Mammary epithelial cell (primary cell): ENCODE measurements at regions of chr18 and their contacts with region 1.

Region 1: GRCh38 chr18:61893971-61894750 is 1.4 kb upstream of the RNF152 start:
- DNase-seq: peak; percentile 79
- H3K4me3 ChIP-seq: peak overlapping the region; percentile 66 to 91 (median 79)
- H3K27ac ChIP-seq: peak overlapping the region; percentile 48
- H3K4me1 ChIP-seq: peaks cover 45% of the 10 kb centered on the region
- H3K27me3 ChIP-seq: no peaks in the 10 kb centered on the region
- CTCF ChIP-seq: peak in 1 of 2 donors; percentile 49

Region 2: GRCh38 chr18:61322265-61322873 is 571.8 kb before region 1 on chr18:
- CTCF ChIA-PET with region 1: no interaction called
- dilution Hi-C with region 1: no loop called
- in situ Hi-C with region 1: no loop called
- intact Hi-C with region 1: loop called (anchors 5 kb)
- DNase-seq: peak; percentile 35
- H3K4me3 ChIP-seq: no peak overlapping the region
- H3K27ac ChIP-seq: no peak overlapping the region
- H3K4me1 ChIP-seq: no peaks in the 10 kb centered on the region
- H3K27me3 ChIP-seq: no peaks in the 10 kb centered on the region
- CTCF ChIP-seq: peak; percentile 87 to 97

Region 3: DNA sequence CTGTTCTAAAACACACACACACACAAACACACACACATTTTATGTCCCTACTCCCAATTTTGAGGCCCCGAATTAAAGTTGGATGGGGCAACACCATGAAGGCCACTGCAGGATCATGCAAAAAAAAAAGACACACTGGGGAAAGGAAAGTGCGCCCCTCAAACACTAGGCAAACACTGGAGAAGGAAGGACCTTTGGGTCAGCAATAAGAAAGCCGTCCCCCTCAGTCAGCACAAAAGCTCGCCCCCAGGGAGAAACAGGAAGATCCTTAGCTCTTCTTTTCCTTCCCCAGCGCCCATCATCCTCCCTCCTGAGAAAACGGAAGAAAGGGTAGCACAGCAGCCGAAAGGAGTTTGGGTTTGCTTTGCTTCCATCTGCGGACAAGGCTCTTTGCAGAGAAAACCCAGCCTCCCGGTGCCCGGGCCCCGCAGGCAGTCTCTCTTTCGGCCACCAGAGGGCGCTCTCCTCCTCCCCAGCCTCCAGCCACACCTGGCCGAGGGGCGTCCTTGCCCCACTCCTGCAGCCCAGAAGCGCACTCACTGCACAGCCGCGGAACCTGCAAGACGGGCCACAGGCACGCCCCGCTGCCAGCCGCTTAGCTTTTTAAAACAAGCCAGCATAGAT is 312.5 kb before region 1 on chr18:
- CTCF ChIA-PET with region 1: interaction called, 8 read pairs
- dilution Hi-C with region 1: no loop called
- in situ Hi-C with region 1: loop called in 1 of 2 experiments (anchors 25 kb)
- intact Hi-C with region 1: loop called (anchors 1 kb)
- DNase-seq: peak; percentile 59
- H3K4me3 ChIP-seq: peak overlapping the region; percentile 44 to 56 (median 50)
- H3K27ac ChIP-seq: no peak overlapping the region
- H3K4me1 ChIP-seq: peaks cover 10% of the 10 kb centered on the region
- H3K27me3 ChIP-seq: no peaks in the 10 kb centered on the region
- CTCF ChIP-seq: peak; percentile 85 to 98

Region 4: GRCh38 chr18:61854578-61855448 is 39.3 kb before region 1 on chr18:
- CTCF ChIA-PET with region 1: interaction called, 8 read pairs
- dilution Hi-C with region 1: no loop called
- in situ Hi-C with region 1: no loop called
- intact Hi-C with region 1: loop called (anchors 1 kb)
- DNase-seq: peak; percentile 47
- H3K4me3 ChIP-seq: no peak overlapping the region
- H3K27ac ChIP-seq: no peak overlapping the region
- H3K4me1 ChIP-seq: peaks cover 35% of the 10 kb centered on the region
- H3K27me3 ChIP-seq: no peaks in the 10 kb centered on the region
- CTCF ChIP-seq: no peak

Region 5: GRCh38 chr18:61992285-61992684 is 98.1 kb after region 1 on chr18:
- CTCF ChIA-PET with region 1: no interaction called
- dilution Hi-C with region 1: no loop called
- in situ Hi-C with region 1: no loop called
- intact Hi-C with region 1: loop called (anchors 1 kb)
- DNase-seq: peak; percentile 80
- H3K4me3 ChIP-seq: no peak overlapping the region
- H3K27ac ChIP-seq: peak overlapping the region; percentile 61
- H3K4me1 ChIP-seq: peaks cover 53% of the 10 kb centered on the region
- H3K27me3 ChIP-seq: no peaks in the 10 kb centered on the region
- CTCF ChIP-seq: no peak